Aorta (tissue), 5 donors: ENCODE measurements at regions of chr10 and their contacts with region 1.

Region 1: GRCh38 chr10:96513698-96514561 is at the start of gene TLL2:
- DNase-seq: peak; percentile 87 to 94
- ATAC-seq: peak; percentile 95
- H3K4me3 ChIP-seq: peak within 1 kb of the TSS; percentile 2 to 30
- H3K27ac ChIP-seq: no peak within 1 kb of the TSS
- H3K4me1 ChIP-seq: no peaks in the 10 kb centered on the region
- H3K27me3 ChIP-seq: no peaks in the 10 kb centered on the region
- total RNA-seq, gene TLL2: 0.12 to 0.36 TPM

Region 2: DNA sequence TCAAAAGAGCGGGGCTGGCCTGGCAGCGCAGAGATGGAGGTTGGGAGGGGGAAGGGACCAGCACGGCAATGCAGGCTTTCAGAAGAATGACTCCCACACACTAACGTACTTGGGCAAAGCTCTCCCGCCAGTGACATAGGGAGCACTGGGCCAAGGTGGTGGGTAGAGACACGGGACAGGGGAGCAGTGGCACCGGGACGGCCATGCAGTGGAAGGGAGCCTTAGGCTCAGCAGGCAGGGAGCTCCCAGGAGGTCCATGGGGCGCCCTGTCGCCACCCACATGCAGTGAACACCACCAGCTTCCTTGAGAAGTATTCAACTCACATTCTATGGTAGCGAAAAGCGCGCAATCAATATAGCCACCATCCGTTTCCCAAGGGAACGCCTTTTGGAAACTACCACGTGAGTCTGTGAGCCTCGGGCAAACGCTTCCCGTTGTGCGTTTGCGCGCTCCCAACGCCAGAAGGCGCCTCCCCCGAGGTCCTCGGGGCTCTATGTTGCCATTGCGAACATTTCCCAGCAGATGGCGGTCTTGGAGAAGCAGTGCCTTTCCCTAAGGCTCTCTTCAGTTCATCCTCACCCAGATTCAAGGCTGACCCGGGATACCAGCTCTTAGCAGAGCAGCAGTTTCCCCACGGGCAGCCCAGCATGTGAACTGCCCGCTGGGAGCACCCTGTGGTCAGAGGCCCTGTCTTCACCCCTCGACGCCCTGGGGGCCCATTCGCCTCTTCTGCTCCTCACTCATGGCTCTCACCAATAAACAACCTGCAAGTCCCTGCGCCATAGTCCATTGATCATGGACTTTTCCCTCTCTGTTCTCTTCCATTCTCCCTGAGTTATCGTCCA is 138.7 kb before region 1 on chr10:
- intact Hi-C with region 1: loop called (anchors 5 kb)
- DNase-seq: peak; percentile 87 to 93
- ATAC-seq: peak; percentile 93
- H3K4me3 ChIP-seq: no peak overlapping the region
- H3K27ac ChIP-seq: no peak overlapping the region
- H3K4me1 ChIP-seq: no peaks in the 10 kb centered on the region
- H3K27me3 ChIP-seq: no peaks in the 10 kb centered on the region

Region 3: DNA sequence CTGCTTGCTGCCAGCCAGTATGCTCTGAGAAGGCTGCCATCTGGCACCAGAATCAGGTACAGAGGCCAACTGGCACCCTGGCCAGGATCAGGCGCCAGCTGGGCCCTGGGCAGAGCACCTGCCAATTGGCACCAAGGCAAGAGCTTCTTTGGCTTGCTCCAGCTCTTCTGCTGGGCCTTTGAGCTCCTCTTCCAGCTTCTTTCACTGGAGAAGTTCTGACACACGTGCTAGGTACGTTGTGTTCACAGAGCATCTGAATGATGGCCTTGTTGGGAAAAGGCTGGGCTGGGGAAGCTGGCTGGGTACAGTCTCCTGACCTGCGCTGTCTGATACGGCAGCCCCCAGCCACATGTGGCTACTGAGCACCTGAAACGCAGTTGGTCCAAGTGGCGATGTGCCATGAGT is 123.5 kb before region 1 on chr10:
- intact Hi-C with region 1: loop called in 1 of 2 experiments (anchors 5 kb)
- DNase-seq: peak; percentile 75 to 83
- ATAC-seq: peak; percentile 70
- H3K4me3 ChIP-seq: no peak overlapping the region
- H3K27ac ChIP-seq: no peak overlapping the region
- H3K4me1 ChIP-seq: no peaks in the 10 kb centered on the region
- H3K27me3 ChIP-seq: no peaks in the 10 kb centered on the region

Region 4: DNA sequence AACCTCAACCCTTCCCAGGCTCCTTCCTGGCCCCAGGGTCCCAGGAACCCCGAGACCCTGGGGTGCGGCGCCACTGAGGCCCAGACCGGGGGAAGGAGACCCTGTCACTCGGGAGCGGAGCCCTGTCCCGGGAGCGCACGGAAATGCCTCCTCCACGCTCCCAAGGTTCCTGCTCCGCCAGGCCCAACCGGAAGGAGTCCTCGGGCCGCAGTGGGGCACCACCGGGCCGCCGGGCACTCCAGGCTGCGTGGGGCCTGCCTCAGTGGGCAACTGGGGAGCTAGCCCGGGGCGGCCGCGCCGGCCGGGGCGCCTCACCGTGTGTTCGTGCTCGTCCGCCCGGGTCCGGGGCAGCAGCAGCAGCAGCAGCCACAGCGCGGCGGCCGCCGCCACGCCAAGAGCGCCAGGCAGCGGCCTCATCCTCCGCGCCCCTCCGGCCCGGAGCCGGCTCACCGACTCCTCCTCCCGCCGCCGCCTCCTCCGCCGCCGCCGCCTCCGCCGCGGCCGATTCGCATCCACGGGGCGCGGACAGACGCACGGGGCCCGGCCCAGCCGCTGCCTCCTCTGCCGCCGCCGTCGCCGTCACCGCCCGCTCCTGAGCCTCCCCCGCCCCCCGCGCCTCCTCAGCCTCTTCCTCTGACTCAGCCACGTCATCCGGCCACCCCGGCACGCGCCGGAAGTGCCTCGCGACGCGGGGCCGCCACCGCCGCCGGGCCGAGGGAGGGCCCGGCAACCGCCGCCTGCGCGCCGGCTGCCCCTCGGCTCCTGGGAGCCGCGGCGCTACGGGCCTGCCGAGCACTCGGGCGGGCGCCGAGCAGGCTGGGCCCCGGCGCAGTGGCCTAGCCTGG is 72.7 kb after region 1 on chr10 and contains the start of gene TM9SF3:
- intact Hi-C with region 1: loop called in 1 of 2 experiments (anchors 5 kb)
- DNase-seq: peak; percentile 97 to 98
- ATAC-seq: peak; percentile 95
- H3K4me3 ChIP-seq: peak within 1 kb of the TSS; percentile 70 to 95
- H3K27ac ChIP-seq: peak within 1 kb of the TSS; percentile 93 to 99
- H3K4me1 ChIP-seq: peaks cover 0 to 3% of the 10 kb centered on the region in 2 donors
- H3K27me3 ChIP-seq: no peaks in the 10 kb centered on the region
- total RNA-seq, gene TM9SF3: 120 to 137 TPM